Activated CD4-positive, alpha-beta T cell treated with anti-CD3 and anti-CD28 coated beads, Interleukin-2, amount 10 ng/mL, durations not matched to agents 24 days and 14 days (primary cell): ENCODE measurements at regions of chr2 and their contacts with region 1.

Region 1: GRCh38 chr2:237434866-237435311 is 20.9 kb upstream of the COL6A3 start:
- DNase-seq: peak; percentile 92
- H3K4me3 Mint-ChIP-seq: peak overlapping the region; percentile 89
- H3K27ac Mint-ChIP-seq: peak overlapping the region; percentile 95
- H3K4me1 Mint-ChIP-seq: peaks cover 79% of the 10 kb centered on the region
- H3K27me3 Mint-ChIP-seq: no peaks in the 10 kb centered on the region

Region 2: DNA sequence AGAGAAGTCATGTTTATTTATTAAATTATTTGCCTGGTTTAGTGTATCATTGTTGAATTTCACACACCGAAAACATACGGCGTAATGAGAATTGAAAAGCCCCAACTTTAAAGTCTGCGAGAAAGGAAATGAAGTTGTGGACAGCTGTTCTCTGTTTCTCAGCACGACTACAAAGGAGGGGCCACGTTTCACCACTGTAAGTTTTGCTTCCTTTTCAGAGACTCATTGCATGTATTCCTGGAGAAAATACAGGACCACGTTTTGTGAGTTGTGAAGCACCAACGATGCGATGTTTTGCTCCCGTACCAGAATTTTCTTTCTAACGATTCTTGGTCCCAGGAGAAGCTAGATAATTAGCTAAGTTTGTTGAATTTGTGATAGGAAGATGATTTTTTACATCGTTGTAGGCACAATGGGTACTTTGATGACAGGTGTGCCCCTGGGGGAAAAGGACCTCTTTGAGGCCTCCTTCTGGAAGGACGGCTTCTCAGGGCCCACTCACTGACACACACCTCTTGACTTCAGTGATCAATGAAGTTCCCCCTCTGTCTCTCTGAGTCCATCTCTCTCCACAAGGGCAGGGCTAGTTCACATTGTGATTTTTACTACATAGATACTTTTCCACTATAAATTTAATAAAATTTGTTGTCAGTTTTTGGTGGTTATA is 888.9 kb before region 1 on chr2:
- intact Hi-C with region 1: loop called (anchors 10 kb)
- DNase-seq: peak; percentile 81
- H3K4me3 Mint-ChIP-seq: peak overlapping the region; percentile 80
- H3K27ac Mint-ChIP-seq: peak overlapping the region; percentile 89
- H3K4me1 Mint-ChIP-seq: peaks cover 74% of the 10 kb centered on the region
- H3K27me3 Mint-ChIP-seq: no peaks in the 10 kb centered on the region

Region 3: GRCh38 chr2:237298151-237299118 is 136.5 kb before region 1 on chr2:
- intact Hi-C with region 1: no loop called
- DNase-seq: no peak
- H3K4me3 Mint-ChIP-seq: no peak overlapping the region
- H3K27ac Mint-ChIP-seq: no peak overlapping the region
- H3K4me1 Mint-ChIP-seq: no peaks in the 10 kb centered on the region
- H3K27me3 Mint-ChIP-seq: peaks cover 8% of the 10 kb centered on the region

Region 4: DNA sequence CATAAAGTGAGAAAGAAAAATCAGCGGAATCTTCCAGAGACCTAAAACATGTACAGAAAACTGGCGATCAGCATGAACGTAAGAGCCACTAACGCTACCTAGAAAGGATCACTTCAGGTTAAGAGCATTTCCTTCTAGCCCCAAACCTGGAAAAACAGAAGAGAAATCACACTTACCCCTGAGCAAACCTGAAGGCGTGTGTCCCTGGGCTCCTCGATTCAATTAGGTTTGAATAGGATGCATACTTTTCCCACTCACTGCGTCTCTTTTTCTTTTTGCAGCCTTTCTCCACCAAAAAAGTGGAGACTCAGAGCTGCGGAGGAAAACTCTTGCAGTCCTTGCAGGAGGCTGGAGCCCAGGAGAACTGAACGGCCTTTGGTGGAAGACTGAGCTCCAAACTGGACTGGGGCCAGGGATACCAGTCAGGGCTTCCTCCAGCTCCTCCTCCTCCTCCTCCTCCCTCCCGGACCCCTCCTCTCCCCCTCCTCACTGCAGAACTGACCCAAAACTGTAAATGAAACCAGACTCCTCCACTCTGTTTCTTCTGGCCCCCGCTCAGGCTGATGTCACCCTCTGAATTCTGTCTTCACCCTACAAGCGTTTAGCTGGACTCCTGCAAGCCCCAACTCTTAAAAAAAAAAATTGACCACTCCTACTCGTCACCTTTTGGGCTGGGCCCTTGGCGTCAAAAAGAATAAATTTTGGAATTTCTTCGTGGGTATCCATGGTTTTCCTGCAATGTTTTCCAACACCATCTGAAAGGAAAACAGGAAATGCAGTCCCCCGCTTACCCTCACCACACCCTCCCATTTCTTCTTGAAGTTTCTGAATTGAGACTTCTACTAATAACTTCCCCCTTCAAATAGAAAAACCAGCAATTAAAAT is 20.9 kb before region 1 on chr2 and contains the start of gene COL6A3:
- intact Hi-C with region 1: no loop called
- DNase-seq: no peak
- H3K4me3 Mint-ChIP-seq: no peak within 1 kb of the TSS
- H3K27ac Mint-ChIP-seq: no peak within 1 kb of the TSS
- H3K4me1 Mint-ChIP-seq: peaks cover 3% of the 10 kb centered on the region
- H3K27me3 Mint-ChIP-seq: peaks cover 1% of the 10 kb centered on the region
- total RNA-seq, gene COL6A3: 27.6 and 28.7 TPM in 2 replicates

Region 5: GRCh38 chr2:238009563-238009962 is 574.7 kb after region 1 on chr2:
- intact Hi-C with region 1: loop called (anchors 10 kb)
- DNase-seq: no peak
- H3K4me3 Mint-ChIP-seq: peak overlapping the region; percentile 67
- H3K27ac Mint-ChIP-seq: peak overlapping the region; percentile 92
- H3K4me1 Mint-ChIP-seq: peaks cover 48% of the 10 kb centered on the region
- H3K27me3 Mint-ChIP-seq: no peaks in the 10 kb centered on the region